ENCODE measurements at regions of chr6 and their contacts with region 1.

Region 1: GRCh38 chr6:36724514-36725390 is 27.1 kb downstream of the RAB44 start:
- DNase-seq: peak; percentile 84
- ATAC-seq: peak; percentile 93
- H3K4me3 Mint-ChIP-seq: no peak overlapping the region
- H3K27ac Mint-ChIP-seq: no peak overlapping the region
- H3K4me1 Mint-ChIP-seq: peaks cover 2% of the 10 kb centered on the region; the same call in 1 of the 2 replicates
- H3K27me3 Mint-ChIP-seq: peaks cover 2% of the 10 kb centered on the region; the same call in 1 of the 2 replicates
- CTCF ChIP-seq: peak; percentile 27; the same call in 1 of the 2 replicates

Region 2: DNA sequence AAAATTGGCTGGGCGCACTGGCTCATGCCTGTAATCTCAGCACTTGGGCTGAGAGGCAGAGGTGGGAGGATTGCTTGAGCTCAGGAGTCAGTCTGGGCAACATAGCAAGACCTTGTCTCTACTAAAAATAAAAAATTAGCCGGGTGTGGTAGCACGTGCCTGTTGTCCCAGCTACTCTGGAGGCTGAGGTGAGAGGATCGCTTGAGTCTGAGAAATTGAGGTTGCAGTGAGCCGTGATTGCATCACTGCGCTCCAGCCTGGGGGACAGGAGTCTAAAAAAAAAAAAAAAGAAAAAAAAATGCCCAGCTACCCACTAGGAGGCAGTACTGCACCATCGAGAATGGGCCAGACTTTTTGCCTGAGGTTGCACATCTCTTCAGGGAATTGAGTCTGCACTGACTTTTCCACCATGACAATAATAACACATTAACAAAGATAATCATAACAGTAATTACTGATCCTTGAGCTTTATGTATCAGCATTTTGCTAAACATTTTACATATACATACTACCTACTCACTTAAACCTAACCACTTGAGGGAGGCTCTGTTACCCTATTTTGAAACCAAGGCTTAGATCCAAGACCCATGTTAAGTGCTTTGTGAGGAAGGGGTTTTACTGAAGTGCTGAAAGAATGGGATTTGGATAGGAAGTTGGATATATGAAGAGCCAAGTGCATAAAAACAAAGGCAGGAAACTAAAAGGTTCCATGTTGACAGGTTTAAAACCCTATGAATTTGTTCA is 109.6 kb before region 1 on chr6:
- CTCF ChIA-PET with region 1: interaction called, 18 read pairs
- POLR2A ChIA-PET with region 1: interaction called, 4 read pairs
- DNase-seq: peak; percentile 33
- ATAC-seq: peak; percentile 43
- H3K4me3 Mint-ChIP-seq: no peak overlapping the region
- H3K27ac Mint-ChIP-seq: peak overlapping the region; percentile 74; the same call in 1 of the 2 replicates
- H3K4me1 Mint-ChIP-seq: peaks cover 10% of the 10 kb centered on the region; the same call in 1 of the 2 replicates
- H3K27me3 Mint-ChIP-seq: no peaks in the 10 kb centered on the region
- CTCF ChIP-seq: peak; percentile 74

Region 3: DNA sequence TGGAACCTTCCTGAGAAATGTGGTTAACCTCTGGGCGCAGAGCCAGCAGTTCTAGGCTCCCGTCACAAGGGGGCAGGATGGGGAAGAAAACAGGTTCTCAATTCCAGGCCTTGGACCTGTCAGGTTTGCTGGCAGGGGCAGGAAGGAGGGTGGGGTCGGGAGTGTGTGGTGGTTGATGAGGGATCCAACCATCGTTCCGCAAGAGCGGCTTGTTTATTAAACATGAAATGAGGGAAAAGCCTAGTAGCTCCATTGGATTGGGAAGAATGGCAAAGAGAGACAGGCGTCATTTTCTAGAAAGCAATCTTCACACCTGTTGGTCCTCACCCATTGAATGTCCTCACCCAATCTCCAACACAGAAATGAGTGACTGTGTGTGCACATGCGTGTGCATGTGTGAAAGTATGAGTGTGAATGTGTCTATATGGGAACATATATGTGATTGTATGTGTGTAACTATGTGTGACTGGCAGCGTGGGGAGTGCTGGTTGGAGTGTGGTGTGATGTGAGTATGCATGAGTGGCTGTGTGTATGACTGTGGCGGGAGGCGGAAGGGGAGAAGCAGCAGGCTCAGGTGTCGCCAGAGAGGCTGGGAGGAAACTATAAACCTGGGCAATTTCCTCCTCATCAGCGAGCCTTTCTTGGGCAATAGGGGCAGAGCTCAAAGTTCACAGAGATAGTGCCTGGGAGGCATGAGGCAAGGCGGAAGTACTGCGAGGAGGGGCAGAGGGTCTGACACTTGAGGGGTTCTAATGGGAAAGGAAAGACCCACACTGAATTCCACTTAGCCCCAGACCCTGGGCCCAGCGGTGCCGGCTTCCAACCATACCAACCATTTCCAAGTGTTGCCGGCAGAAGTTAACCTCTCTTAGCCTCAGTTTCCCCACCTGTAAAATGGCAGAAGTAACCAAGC is 100.9 kb before region 1 on chr6:
- CTCF ChIA-PET with region 1: interaction called, 11 read pairs
- POLR2A ChIA-PET with region 1: no interaction called
- DNase-seq: peak; percentile 89
- ATAC-seq: peak; percentile 94
- H3K4me3 Mint-ChIP-seq: no peak overlapping the region
- H3K27ac Mint-ChIP-seq: no peak overlapping the region
- H3K4me1 Mint-ChIP-seq: peaks cover 10% of the 10 kb centered on the region
- H3K27me3 Mint-ChIP-seq: no peaks in the 10 kb centered on the region
- CTCF ChIP-seq: peak; percentile 75

Region 4: GRCh38 chr6:36698196-36698595 is 26.6 kb before region 1 on chr6:
- CTCF ChIA-PET with region 1: no interaction called
- POLR2A ChIA-PET with region 1: no interaction called
- DNase-seq: no peak
- ATAC-seq: no peak
- H3K4me3 Mint-ChIP-seq: no peak overlapping the region
- H3K27ac Mint-ChIP-seq: no peak overlapping the region
- H3K4me1 Mint-ChIP-seq: 0 out of 2 replicates have a peak, but pooled peaks cover 2% of the 10 kb centered on the region
- H3K27me3 Mint-ChIP-seq: no peaks in the 10 kb centered on the region
- CTCF ChIP-seq: no peak

Region 5: GRCh38 chr6:36979347-36979742 is 254.6 kb after region 1 on chr6:
- CTCF ChIA-PET with region 1: no interaction called
- POLR2A ChIA-PET with region 1: no interaction called
- DNase-seq: no peak
- ATAC-seq: no peak
- H3K4me3 Mint-ChIP-seq: no peak overlapping the region
- H3K27ac Mint-ChIP-seq: peak overlapping the region; percentile 37
- H3K4me1 Mint-ChIP-seq: peaks cover 21% of the 10 kb centered on the region
- H3K27me3 Mint-ChIP-seq: no peaks in the 10 kb centered on the region
- CTCF ChIP-seq: no peak

Measured in WTC11 (cell line).